Esophagus muscularis mucosa (tissue), 4 donors: ENCODE measurements at regions of chr10 and their contacts with region 1.

Region 1: DNA sequence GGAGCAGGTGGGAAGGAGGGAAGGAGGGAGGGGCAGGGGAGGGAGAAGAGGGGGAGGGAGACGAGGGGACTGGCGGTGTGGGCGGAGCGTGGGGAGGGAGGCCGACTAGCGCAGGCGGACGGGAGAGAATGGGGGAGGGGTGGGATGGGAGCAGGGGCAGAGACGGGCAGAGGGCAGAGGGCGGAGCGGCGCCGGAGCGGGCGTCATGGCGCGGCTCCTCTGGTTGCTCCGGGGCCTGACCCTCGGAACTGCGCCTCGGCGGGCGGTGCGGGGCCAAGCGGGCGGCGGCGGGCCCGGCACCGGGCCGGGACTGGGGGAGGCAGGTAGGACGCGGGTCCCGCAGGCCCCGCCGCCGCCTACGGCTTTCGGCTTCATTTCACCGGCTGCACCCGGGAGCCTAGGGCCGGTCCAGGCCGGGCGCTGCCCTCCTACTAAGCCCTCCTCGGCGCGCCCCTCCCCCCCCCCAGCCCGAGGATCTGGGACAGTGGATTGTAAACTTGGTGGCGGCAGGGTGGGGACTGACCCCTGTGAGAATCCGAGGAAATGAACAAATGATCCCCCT is at the start of gene MSRB2:
- DNase-seq: peak; percentile 98
- H3K4me3 ChIP-seq: peak within 1 kb of the TSS; percentile 86 to 96 (median 88)
- H3K27ac ChIP-seq: peak within 1 kb of the TSS; percentile 97 to 98 (median 97)
- H3K4me1 ChIP-seq: peaks cover 22 to 37% (median 24%) of the 10 kb centered on the region in 4 donors
- H3K27me3 ChIP-seq: no peaks in the 10 kb centered on the region
- CTCF ChIP-seq: no peak
- EP300 ChIP-seq: no peak
- POLR2A ChIP-seq: peak; percentile 89
- total RNA-seq, gene MSRB2: 36.0 to 48.6 (median 40.6) TPM

Region 2: GRCh38 chr10:22003079-22003913 is 1092.2 kb before region 1 on chr10 and contains the start of gene DNAJC1:
- intact Hi-C with region 1: loop called (anchors 10 kb)
- DNase-seq: peak; percentile 99
- H3K4me3 ChIP-seq: peak within 1 kb of the TSS; percentile 71 to 93 (median 80)
- H3K27ac ChIP-seq: peak within 1 kb of the TSS; percentile 93 to 99 (median 94)
- H3K4me1 ChIP-seq: peaks cover 0 to 33% (median 26%) of the 10 kb centered on the region in 4 donors
- H3K27me3 ChIP-seq: no peaks in the 10 kb centered on the region
- CTCF ChIP-seq: peak in 1 of 3 experiments; percentile 28
- EP300 ChIP-seq: no peak
- POLR2A ChIP-seq: peak; percentile 83
- total RNA-seq, gene DNAJC1: 46.5 to 70.6 (median 61.5) TPM

Region 3: DNA sequence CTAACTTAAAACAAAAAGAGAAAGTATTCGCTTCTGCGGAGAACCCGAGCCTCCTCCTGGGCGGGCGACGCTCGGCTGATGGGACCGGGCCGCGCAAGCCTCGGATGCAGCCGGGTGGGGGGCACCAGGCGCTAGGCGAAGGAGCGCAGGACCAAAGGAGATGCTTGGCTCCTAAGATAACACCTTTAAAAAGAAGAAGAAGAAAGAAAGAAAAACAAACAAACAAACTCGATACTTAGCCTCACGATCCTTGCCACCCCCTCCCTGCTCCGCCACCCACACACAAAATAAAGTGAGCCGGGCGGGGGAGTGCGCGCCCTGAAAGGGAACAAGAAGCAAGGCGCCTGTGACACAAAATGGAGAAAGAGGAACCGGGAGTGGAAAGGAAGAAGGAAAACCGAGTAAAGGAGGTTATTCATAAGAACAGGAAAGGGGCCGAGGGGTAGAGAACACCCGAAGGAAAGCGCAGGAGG is 843.7 kb before region 1 on chr10:
- intact Hi-C with region 1: loop called (anchors 10 kb)
- DNase-seq: peak; percentile 94
- H3K4me3 ChIP-seq: peak overlapping the region; percentile 80 to 87 (median 84)
- H3K27ac ChIP-seq: peak overlapping the region; percentile 90 to 97 (median 96)
- H3K4me1 ChIP-seq: peaks cover 0 to 19% (median 10%) of the 10 kb centered on the region in 4 donors
- H3K27me3 ChIP-seq: no peaks in the 10 kb centered on the region
- CTCF ChIP-seq: no peak
- EP300 ChIP-seq: no peak
- POLR2A ChIP-seq: no peak

Region 4: DNA sequence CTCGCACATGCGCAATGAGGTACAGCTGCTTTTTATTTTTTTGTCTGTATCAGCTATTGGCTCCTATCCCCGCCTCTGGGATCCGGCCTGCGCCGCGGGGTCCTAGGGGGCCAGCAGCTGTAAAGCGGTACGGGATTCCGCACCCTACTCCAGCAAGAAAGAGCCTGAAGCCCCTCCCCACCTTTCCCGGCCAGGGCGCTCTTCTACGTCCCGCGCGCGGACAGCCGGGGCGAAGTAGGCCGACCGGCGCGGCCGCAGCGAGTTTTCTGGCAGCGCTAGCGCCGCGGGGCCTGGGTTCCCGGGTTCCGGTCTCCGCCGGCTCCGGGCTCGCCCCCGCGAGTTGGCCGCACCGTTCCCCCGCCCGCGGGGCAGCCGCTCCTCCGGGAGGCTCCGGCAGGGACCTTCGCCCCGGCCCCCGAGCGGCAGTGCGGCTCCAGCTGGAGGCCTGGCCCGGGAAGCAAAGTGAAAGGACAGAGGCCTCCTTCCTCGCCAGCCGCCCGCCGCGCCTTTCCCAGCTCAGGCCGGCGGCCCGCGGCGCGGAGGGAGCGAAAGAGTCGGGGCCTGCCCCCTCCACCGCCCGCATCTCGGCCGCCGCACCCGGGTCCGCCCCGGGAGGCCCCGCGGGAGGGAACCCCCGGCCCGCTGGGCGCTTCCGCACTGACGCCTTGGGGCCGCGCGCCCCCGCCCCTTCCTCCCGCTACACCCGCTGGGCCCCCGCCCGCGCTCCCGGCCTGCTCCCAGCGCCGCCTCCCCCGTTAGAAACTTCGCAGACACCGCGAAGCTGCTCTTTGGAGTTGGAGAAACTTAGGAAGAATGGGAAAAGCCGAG is 754.9 kb before region 1 on chr10:
- intact Hi-C with region 1: loop called (anchors 10 kb)
- DNase-seq: no peak
- H3K4me3 ChIP-seq: peak overlapping the region; percentile 81 to 93 (median 86)
- H3K27ac ChIP-seq: peak overlapping the region; percentile 96 to 98 (median 98)
- H3K4me1 ChIP-seq: peaks cover 33 to 44% (median 37%) of the 10 kb centered on the region in 4 donors
- H3K27me3 ChIP-seq: peaks cover 30 to 83% (median 79%) of the 10 kb centered on the region in 4 donors
- CTCF ChIP-seq: no peak
- EP300 ChIP-seq: no peak
- POLR2A ChIP-seq: peak; percentile 6

Region 5: DNA sequence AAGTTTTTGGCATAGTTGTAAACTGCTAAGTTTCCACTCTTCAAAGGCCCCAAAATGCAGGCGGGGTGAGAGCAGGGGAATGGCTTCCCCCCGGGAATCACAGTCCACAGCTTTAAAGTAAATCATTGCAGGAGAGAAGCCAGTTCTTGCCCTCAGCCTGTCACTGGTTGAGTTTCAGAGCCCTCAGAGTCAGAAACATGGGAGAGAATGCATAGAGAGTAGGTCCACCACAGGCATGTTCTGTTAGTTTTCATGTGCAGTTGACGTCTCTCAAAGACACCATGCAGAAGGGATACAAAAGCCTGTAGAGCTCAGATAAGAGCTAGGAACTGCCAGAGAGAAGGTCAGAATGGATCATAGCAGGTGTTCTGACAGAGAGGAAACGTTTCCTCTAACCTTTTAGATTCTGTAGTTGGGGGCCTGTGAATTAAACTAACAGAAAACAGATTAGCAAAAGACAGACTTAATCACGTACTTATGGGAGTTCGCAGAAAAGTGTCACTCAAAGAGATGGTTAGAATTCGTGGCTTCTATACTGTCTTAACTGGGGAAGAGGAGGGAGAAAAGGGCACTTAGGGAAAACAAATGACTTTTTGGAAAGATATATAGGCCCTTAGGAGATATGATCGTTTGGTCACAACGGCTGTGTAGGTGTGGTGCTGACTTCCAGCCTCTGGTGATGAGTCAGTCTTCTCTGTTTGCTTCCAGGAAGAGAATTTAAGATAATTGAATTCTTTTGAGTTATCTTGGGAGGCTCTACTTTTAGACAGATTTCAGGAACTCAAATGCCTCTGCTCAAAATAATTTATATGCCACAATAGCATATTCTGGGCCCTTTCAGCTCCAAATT is 48.1 kb before region 1 on chr10:
- intact Hi-C with region 1: no loop called
- DNase-seq: peak; percentile 70
- H3K4me3 ChIP-seq: no peak overlapping the region
- H3K27ac ChIP-seq: no peak overlapping the region
- H3K4me1 ChIP-seq: peaks cover 4 to 19% (median 17%) of the 10 kb centered on the region in 4 donors
- H3K27me3 ChIP-seq: no peaks in the 10 kb centered on the region
- CTCF ChIP-seq: no peak
- EP300 ChIP-seq: no peak
- POLR2A ChIP-seq: no peak

Region 6: DNA sequence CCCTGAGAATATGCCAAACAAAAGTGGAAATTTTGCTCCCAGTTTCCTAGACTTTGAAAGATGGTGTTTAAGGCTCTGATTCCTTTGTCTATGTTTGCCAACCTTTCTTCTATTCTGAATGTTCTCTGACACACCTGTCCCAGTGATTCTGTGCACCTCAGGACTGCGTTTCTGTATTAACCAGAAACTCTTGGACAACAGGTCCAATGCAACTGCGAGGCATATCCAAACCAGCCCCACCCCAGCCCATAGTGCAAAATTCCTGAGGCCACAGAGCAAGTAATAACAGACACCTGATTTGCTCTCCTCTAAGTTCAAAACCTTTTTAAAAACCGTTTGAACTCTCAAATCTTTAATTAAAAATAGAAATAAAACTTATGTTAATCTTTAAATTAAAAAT is 37.1 kb before region 1 on chr10:
- intact Hi-C with region 1: loop called (anchors 2 kb)
- DNase-seq: no peak
- H3K4me3 ChIP-seq: no peak overlapping the region
- H3K27ac ChIP-seq: no peak overlapping the region
- H3K4me1 ChIP-seq: peaks cover 0 to 5% (median 0%) of the 10 kb centered on the region in 4 donors
- H3K27me3 ChIP-seq: no peaks in the 10 kb centered on the region
- CTCF ChIP-seq: no peak
- EP300 ChIP-seq: no peak
- POLR2A ChIP-seq: no peak

Region 7: DNA sequence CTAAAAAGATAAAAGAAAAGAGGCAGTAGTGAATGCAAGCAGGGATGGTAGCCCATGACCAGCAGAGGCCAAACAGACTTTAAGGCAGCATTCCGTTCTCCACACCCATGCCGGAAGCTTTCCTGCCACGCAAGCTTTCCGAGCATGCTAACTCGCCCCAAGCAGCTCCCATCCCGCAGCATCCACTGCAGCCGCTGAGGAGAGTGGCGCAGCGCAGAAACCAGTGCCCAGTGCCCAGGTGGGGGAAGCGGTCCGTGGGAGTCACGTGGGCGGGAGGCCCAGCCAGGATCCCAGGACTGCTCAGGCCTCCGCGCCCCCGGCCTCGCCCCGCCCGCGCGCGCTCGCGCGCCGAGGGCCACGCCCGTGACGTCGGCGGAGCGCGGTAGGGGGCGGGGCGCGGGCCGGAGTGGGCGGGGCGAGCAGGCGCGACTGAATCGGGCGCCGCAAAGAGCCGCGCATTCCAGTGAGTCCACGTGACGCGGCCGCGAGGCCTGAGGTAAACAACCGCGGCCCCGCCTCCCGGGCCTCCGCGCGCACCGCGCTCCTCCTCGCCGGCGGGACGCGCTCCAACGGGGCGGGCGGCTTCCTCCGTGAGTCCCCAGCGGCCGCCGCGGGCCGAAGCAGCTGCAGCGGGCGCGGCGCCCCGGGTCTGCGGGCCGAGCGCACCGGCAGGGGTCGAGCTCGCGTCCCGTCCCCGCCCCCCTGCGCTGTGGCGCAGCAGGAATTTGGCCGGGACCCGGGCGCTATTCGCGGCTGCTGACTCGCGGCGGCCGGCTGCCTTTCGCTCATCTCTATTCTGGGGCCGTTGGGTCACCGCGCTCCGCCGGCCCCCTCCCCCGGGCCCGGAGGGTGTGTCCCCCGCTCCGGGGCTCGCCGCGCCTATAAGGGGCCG is 343.3 kb after region 1 on chr10 and contains the start of gene OTUD1:
- intact Hi-C with region 1: loop called (anchors 10 kb)
- DNase-seq: peak; percentile 98
- H3K4me3 ChIP-seq: peak within 1 kb of the TSS; percentile 82 to 95 (median 92)
- H3K27ac ChIP-seq: peak within 1 kb of the TSS; percentile 96 to 97 (median 96)
- H3K4me1 ChIP-seq: peaks cover 24 to 44% (median 35%) of the 10 kb centered on the region in 4 donors
- H3K27me3 ChIP-seq: no peaks in the 10 kb centered on the region
- CTCF ChIP-seq: peak; percentile 3 to 38 (median 28)
- EP300 ChIP-seq: no peak
- POLR2A ChIP-seq: peak; percentile 53
- total RNA-seq, gene OTUD1: 9.3 to 19.1 (median 11.4) TPM